Activated naive CD4-positive, alpha-beta T cell treated with anti-CD3 and anti-CD28 coated beads for 36 hours (primary cell): ENCODE measurements at regions of chr20 and their contacts with region 1.

Region 1: DNA sequence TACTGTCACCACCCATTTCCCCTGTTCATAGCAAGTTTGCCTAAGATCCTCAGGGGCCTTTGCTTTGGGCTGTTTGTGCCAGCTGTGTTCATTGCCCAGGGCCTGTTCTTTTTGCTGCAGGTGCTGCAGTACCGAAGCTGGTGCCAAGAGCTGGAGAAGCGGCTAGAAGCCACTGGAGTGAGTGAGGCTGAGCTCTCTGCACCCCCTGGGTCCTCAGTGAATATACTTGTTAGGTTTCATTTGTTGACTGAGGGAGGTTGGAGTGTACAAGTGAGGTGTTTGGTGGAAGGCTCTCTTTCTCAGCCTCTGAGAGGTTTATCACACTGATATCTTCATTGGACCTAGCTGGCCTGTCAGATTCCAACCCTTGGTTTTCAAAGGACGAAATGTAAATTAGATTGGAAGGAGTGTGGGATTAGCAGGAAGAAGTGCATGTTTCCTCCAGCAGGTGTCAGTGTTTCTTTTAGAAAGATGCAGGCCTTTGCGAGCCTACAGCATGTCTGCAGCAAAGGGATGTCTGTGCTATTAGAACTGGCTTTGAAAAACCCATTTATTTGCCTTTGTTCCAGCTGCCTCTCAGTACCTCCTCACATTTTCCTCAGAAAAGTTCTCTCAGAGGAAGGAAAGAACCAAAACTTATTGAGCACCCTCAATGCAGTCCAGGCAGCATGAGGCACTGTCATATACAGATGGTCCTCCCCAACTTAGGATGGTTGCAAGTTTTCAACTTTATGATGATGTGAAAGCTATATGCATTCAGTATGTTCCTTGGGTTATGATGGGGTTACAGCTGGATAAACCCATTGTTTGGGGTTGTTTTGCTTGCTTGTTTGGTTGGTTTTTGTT is 8.3 kb downstream of the CEP250 start:
- DNase-seq: peak; percentile 71
- H3K4me3 Mint-ChIP-seq: no peak overlapping the region
- H3K27ac Mint-ChIP-seq: no peak overlapping the region
- H3K4me1 Mint-ChIP-seq: no peaks in the 10 kb centered on the region
- H3K27me3 Mint-ChIP-seq: no peaks in the 10 kb centered on the region

Region 2: GRCh38 chr20:35474303-35474871 is 10.7 kb after region 1 on chr20:
- CTCF ChIA-PET with region 1: interaction called, 16 read pairs
- intact Hi-C with region 1: no loop called
- DNase-seq: no peak
- H3K4me3 Mint-ChIP-seq: no peak overlapping the region
- H3K27ac Mint-ChIP-seq: no peak overlapping the region
- H3K4me1 Mint-ChIP-seq: no peaks in the 10 kb centered on the region
- H3K27me3 Mint-ChIP-seq: no peaks in the 10 kb centered on the region

Region 3: DNA sequence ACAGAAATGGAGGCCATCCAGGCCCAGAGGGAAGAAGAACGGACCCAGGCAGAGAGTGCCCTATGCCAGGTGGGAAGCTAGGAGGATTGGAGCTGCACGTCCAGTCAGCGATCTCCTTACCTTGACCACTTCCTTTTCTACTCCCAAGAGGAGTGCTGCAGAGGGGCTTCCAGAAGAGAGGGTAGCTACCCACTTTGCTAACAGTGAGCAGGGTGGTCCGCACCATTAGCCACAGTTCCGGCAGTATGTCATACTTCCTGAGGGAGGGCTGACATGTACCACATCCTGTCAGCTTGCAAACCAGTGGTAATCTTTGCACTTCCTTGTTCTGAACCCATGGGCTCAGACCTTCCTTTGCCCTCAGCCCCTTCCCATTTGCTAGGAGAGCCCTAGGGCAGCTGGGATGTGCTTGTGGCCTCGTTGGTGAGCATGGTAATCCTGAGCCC is 27.1 kb after region 1 on chr20:
- CTCF ChIA-PET with region 1: interaction called, 17 read pairs
- intact Hi-C with region 1: no loop called
- DNase-seq: peak; percentile 80
- H3K4me3 Mint-ChIP-seq: peak overlapping the region; percentile 98
- H3K27ac Mint-ChIP-seq: peak overlapping the region; percentile 97
- H3K4me1 Mint-ChIP-seq: peaks cover 42% of the 10 kb centered on the region
- H3K27me3 Mint-ChIP-seq: no peaks in the 10 kb centered on the region

Region 4: DNA sequence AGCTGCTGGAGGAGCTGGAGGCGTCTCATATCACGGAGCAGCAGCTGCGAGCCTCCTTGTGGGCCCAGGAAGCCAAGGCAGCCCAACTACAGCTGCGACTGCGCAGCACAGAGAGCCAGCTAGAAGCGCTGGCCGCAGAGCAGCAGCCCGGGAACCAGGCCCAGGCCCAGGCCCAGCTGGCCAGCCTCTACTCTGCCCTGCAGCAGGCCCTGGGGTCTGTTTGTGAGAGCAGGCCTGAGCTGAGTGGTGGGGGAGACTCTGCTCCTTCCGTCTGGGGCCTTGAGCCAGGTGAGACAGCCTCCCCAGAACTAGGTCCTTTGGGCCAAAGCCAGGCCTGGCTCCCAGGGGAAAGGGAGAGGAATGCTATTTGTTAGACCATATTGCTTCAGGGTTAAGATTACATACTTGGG is 34.1 kb after region 1 on chr20:
- CTCF ChIA-PET with region 1: interaction called, 17 read pairs
- intact Hi-C with region 1: no loop called
- DNase-seq: no peak
- H3K4me3 Mint-ChIP-seq: no peak overlapping the region
- H3K27ac Mint-ChIP-seq: no peak overlapping the region
- H3K4me1 Mint-ChIP-seq: peaks cover under 1% of the 10 kb centered on the region
- H3K27me3 Mint-ChIP-seq: no peaks in the 10 kb centered on the region

Region 5: GRCh38 chr20:35601008-35601973 is 137.6 kb after region 1 on chr20:
- CTCF ChIA-PET with region 1: interaction called, 5 read pairs
- intact Hi-C with region 1: loop called (anchors 1 kb)
- DNase-seq: peak; percentile 91
- H3K4me3 Mint-ChIP-seq: peak overlapping the region; percentile 64
- H3K27ac Mint-ChIP-seq: no peak overlapping the region
- H3K4me1 Mint-ChIP-seq: peaks cover 7% of the 10 kb centered on the region
- H3K27me3 Mint-ChIP-seq: peaks cover 13% of the 10 kb centered on the region

Region 6: DNA sequence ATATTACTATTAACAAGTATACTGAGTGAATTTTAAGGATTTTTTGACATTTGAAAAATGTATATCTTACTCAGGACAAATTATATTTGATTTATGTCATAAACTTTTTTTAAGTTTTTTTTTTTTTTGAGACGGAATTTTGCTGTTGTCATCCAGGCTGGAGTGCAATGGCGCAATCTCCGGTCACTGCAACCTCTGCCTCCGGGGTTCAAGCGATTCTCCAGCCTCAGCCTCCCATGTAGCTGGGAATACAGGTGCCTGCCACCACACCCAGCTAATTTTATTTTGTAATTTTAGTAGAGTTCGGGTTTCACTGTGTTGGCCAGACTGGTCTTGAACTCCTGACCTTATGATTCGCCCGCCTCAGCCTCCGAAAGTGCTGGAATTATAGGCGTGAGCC is 352.7 kb after region 1 on chr20:
- CTCF ChIA-PET with region 1: no interaction called
- intact Hi-C with region 1: no loop called
- DNase-seq: no peak
- H3K4me3 Mint-ChIP-seq: no peak overlapping the region
- H3K27ac Mint-ChIP-seq: no peak overlapping the region
- H3K4me1 Mint-ChIP-seq: peaks cover 25% of the 10 kb centered on the region
- H3K27me3 Mint-ChIP-seq: no peaks in the 10 kb centered on the region

Region 7: GRCh38 chr20:35883778-35884540 is 420.3 kb after region 1 on chr20:
- CTCF ChIA-PET with region 1: interaction called, 3 read pairs
- intact Hi-C with region 1: loop called (anchors 1 kb)
- DNase-seq: peak; percentile 82
- H3K4me3 Mint-ChIP-seq: no peak overlapping the region
- H3K27ac Mint-ChIP-seq: no peak overlapping the region
- H3K4me1 Mint-ChIP-seq: peaks cover 10% of the 10 kb centered on the region
- H3K27me3 Mint-ChIP-seq: no peaks in the 10 kb centered on the region

Region 8: DNA sequence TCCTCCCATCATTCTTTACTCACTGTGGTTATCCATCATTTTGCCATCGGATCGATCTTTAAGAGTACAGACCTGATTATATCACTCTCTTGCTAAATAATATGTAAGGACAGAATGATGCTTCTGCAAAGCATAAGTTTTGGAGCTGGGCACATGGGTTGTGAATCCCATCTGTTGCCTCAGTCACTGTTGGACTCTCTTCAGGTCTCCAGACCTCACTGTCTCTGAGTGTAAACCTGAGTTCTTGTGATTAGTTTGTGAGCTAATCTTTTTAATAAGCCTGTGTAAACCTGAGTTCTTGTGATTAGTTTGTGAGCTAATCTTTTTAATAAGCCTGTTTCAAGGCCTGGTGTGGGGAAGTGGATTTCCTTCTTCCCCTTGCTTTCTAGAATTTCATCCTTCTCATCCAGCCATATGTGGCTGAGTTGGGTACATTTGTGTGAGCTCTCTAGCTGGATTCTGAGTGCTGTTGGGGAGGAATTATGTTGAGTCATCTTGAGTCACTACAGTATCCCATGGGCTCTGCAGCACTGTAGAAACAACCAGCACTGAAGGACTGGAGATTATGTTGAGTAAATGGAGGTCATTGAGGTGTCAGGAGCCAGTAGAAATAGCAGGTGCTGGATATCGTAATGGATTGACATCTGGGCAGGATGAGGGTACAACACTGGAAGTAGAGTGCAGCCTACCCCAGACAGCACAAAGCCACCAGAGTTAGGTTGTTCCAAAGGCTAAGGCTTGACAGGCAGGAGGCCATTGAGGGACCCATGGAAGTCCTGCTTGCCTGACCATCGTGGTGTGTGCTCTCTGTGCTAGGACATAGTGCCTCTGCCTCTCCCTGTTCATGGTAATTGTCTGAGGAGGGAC is 438.2 kb after region 1 on chr20:
- CTCF ChIA-PET with region 1: no interaction called
- intact Hi-C with region 1: no loop called
- DNase-seq: no peak
- H3K4me3 Mint-ChIP-seq: no peak overlapping the region
- H3K27ac Mint-ChIP-seq: no peak overlapping the region
- H3K4me1 Mint-ChIP-seq: peaks cover 9% of the 10 kb centered on the region
- H3K27me3 Mint-ChIP-seq: no peaks in the 10 kb centered on the region